ENCODE measurements at regions of chr1 and their contacts with region 1.

Region 1: GRCh38 chr1:229479660-229480399 is 28.3 kb downstream of the NUP133 start:
- DNase-seq: no peak
- ATAC-seq: no peak

Region 2: DNA sequence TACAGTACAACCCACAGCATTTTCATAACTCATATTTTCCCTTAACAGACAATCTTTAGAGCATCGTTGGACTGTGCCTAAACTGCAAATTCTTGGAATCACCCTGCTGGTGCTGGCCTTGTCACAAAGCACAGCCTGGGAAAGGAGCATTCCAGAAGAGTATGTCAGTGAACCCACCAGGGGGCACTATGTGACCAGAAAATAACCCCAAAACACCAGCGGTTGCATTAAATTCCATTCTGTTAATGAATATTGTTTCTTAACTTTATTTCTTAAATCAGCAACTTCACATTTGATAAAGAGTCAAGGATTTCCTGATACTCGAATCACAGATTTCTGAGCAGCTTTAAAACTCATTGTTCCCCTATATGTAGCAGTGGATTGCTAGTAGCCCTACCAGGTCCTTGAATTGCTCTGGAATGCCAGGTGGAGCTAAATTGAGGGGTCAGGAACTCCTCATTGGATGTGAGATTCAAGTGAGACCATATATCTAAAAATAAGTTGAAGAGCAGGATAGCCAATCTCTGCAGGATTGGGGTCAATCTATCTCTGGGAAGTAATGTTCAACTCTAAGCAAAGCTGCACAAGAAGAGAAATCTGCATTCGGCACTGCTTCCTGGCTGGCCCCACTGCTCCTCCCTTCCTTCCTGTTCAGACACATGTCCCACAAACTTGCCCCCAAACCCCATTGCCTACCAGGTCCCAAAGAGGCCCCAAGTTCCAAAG is 221.6 kb before region 1 on chr1:
- intact Hi-C with region 1: loop called (anchors 5 to 10 kb)
- DNase-seq: peak in 1 of 2 donors; percentile 69
- ATAC-seq: peak; percentile 81

Region 3: DNA sequence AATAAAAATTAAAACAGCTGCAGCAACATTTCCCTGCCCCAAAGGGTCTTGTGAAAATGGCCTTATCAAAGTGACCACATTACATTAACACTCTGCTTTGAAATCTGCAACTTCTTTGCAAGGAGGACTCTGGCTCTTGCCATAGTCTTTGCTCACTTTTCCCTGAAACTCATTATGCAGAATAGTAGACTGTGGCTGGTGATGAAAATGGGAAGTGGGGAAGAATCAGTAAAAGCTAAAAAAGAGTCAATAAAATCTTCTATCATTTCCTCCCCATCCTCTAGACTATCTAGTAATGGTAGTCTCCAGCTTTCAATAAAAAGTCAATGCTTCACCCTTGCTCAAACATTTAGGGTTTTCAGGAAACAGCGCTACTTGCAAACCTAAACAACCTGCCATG is 46.9 kb after region 1 on chr1:
- intact Hi-C with region 1: no loop called
- DNase-seq: no peak
- ATAC-seq: no peak

Measured in left colon (tissue), 2 donors.